Adrenal gland (tissue), 19 donors: ENCODE measurements at regions of chr13 and their contacts with region 1.

Region 1: DNA sequence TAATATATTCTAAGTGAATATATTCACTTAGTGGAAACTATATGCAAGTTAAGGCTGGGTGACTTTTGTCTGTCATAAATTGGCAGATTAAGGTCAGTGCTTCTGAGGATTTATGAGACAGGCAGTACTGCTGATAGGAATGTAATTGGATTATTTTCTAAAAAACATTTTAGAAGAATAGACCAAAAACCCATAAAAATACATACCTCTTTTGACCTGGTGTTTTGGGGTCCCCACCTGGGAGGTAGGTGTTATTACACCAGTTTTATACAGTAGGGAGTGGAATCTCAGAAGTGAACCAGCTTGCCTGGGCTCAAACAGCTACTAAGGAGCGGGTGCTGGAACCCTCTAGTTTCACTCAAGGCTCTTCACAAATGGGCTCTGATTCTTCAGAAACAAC is 25.3 kb downstream of the COG3 start:
- DNase-seq: peak in 1 of 7 donors; percentile 16
- H3K4me3 ChIP-seq: no peak overlapping the region
- H3K27ac ChIP-seq: no peak overlapping the region
- H3K4me1 ChIP-seq: peaks cover 8 to 15% of the 10 kb centered on the region in 2 donors
- H3K27me3 ChIP-seq: no peaks in the 10 kb centered on the region
- CTCF ChIP-seq: peak in 3 of 6 experiments; percentile 29 to 30 (median 29)
- POLR2A ChIP-seq: no peak

Region 2: DNA sequence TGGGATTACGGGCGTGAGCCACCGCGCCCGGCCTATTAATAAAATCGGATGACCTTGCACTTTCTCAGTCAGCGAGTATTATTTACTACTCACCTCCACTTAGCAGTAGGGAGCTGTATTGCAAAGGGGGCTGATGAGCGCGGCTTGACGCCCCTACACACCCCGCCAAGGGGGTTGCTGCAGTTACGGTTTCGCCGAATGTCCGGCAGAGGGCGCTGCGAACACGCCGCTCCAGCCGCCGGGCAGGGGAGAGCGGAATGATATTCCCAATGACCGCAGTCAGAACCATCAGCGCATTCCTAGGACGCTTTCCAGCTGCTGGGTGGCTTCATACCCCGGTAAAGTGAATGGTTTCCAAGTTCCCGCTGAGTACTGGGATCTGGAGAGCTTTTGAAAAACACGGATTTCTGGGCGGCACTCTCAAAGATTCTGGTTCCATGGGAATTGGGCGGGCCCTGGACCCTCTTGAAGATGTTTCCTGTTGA is 119.1 kb before region 1 on chr13:
- intact Hi-C with region 1: loop called in 1 of 2 experiments (anchors 10 kb)
- DNase-seq: peak; percentile 54 to 80 (median 70)
- H3K4me3 ChIP-seq: no peak overlapping the region
- H3K27ac ChIP-seq: peak overlapping the region in 1 of 5 donors; percentile 5
- H3K4me1 ChIP-seq: peaks cover 3 to 9% of the 10 kb centered on the region in 2 donors
- H3K27me3 ChIP-seq: no peaks in the 10 kb centered on the region
- CTCF ChIP-seq: peak; percentile 85 to 98 (median 91)
- POLR2A ChIP-seq: no peak